GM18951 (cell line): ENCODE measurements at regions of chr18 and their contacts with region 1.

Region 1: GRCh38 chr18:73842795-73843394 is 304.7 kb downstream of the FBXO15 start:
- POLR2A ChIP-seq: no peak

Region 2: GRCh38 chr18:72762515-72763122 is 1080.3 kb before region 1 on chr18:
- in situ Hi-C with region 1: loop called (anchors 25 kb)
- POLR2A ChIP-seq: no peak